IMR-90 (cell line): ENCODE measurements at regions of chr1 and their contacts with region 1.

Region 1: DNA sequence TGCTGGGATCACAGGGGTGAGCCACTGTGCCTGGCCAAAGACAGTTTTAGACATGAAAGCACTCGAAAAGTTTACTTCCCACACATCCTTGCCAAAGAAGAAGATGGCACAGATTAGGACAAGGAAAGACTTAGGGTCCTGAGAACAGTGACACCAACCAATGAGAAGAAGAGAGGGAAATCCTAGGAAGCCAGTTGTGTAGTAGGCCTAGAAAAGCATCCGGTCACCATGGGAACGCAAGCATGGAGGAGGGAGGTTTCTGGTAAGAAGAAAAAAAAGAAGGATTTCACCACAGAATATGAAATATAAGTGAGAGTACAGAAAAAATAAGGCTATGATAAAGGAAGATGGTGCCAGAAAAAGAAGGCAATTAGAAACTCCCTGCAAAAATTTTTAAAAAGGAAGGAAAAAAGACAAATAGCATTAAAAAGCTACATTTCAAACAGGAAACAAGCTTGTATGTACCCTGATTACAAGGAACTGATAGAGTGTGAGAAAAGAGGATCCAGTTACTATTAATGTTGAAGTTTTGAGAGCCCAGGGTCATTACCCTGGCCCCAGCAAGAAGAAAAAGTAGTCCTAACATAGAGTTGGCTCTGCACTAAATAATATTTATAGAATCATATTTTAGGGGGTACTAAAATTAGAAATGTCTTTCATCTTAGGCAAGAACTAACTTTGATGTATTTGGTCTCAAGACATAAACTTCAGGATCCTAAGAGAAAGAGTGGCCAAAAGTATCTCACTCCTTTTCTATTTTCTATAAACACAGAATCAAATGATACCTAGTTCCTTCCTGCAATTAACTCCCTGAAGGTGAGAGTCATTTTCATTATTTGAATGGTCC is 16.1 kb downstream of the DIPK1A start:
- DNase-seq: no peak
- ATAC-seq: no peak
- H3K4me3 ChIP-seq: no peak overlapping the region
- H3K27ac ChIP-seq: no peak overlapping the region
- H3K4me1 ChIP-seq: peaks cover 11% of the 10 kb centered on the region
- H3K27me3 ChIP-seq: no peaks in the 10 kb centered on the region
- CTCF ChIP-seq: no peak
- POLR2A ChIP-seq: no peak
- RAD21 ChIP-seq: no peak

Region 2: DNA sequence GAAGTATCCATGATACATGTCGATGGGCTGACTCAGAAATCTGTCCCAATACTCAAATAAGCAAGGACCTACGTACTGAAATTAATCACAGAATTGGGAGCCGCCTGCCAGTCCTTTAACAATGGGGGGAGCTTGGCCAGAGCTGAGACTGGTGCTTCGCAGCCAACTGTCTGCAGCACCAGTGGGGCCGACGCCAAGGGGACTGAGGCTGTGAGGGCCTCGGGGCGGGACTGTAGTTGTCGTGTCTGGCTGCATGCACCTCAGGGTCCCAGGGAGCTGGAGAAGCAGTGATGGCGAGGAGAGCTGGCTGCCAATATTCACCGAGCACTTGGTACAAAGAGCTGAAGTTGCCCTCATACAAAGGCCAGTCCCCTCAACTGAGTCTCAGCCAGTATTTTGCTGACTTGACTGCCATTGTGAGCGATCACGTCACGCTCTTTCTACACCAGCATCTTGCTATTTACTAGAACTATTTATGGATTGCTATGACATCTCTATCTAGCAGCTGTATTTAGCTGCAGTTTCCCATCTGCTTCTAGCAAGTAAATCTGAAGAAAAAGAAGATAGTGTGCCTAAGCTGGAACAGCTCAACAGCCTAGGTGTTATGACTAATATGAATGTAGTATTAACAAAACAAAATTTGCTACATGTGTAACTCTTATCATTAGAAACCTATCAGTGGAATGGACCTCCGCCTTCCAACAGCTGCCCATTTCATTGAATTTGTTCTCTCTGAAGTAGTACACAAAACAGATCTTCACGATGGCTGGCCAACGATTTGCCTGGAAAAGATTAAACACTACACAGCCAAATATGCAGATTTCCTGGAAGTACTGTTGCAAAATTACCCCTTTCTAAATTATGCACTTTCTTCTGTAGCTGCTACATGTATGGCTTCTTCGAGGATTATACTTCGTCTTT is 189.3 kb before region 1 on chr1:
- CTCF ChIA-PET with region 1: no interaction called
- POLR2A ChIA-PET with region 1: no interaction called
- dilution Hi-C with region 1: no loop called
- in situ Hi-C with region 1: no loop called
- intact Hi-C with region 1: no loop called
- DNase-seq: peak; percentile 72
- ATAC-seq: no peak
- H3K4me3 ChIP-seq: no peak overlapping the region
- H3K27ac ChIP-seq: peak overlapping the region; percentile 39
- H3K4me1 ChIP-seq: peaks cover 17% of the 10 kb centered on the region
- H3K27me3 ChIP-seq: no peaks in the 10 kb centered on the region
- CTCF ChIP-seq: no peak
- POLR2A ChIP-seq: no peak
- RAD21 ChIP-seq: no peak

Region 3: GRCh38 chr1:92877792-92878191 is 67.3 kb before region 1 on chr1:
- CTCF ChIA-PET with region 1: no interaction called
- POLR2A ChIA-PET with region 1: no interaction called
- dilution Hi-C with region 1: no loop called
- in situ Hi-C with region 1: no loop called
- intact Hi-C with region 1: loop called (anchors 5 kb)
- DNase-seq: peak; percentile 46
- ATAC-seq: no peak
- H3K4me3 ChIP-seq: no peak overlapping the region
- H3K27ac ChIP-seq: no peak overlapping the region
- H3K4me1 ChIP-seq: no peaks in the 10 kb centered on the region
- H3K27me3 ChIP-seq: no peaks in the 10 kb centered on the region
- CTCF ChIP-seq: no peak
- POLR2A ChIP-seq: no peak
- RAD21 ChIP-seq: no peak

Region 4: DNA sequence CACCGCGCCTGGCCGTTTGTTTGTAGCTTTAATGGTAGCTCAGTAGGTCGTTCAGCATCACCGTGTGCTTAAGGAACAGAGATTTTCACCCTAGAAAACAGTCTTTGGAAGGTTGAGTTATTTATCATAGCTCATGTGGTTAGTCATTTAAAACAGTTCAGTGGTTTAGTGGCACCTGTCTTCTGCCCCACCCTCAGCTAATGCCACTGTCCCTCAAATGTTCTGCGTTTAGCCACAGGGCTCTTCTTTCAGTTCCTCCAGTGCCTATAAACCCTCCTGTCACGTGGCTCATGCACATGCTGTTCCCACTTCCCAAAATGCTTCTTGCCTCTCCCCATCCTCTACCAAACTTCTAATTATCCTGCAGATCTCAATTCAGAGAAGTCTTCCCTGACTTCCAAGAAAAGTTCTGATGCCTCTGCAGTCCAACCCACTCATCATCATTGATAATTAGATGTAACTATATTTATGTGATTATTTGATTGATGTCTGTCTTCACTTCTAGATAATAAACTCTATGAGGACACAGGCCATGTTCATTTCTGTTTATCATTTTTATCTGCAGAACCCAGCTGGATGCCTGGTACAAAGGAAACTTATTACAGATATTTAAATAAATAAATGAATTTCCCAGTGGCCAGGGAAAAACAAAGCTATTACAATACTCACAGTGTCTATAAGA is 30.6 kb after region 1 on chr1:
- CTCF ChIA-PET with region 1: no interaction called
- POLR2A ChIA-PET with region 1: no interaction called
- dilution Hi-C with region 1: no loop called
- in situ Hi-C with region 1: no loop called
- intact Hi-C with region 1: no loop called
- DNase-seq: no peak
- ATAC-seq: no peak
- H3K4me3 ChIP-seq: no peak overlapping the region
- H3K27ac ChIP-seq: no peak overlapping the region
- H3K4me1 ChIP-seq: no peaks in the 10 kb centered on the region
- H3K27me3 ChIP-seq: peaks cover 17% of the 10 kb centered on the region
- CTCF ChIP-seq: no peak
- POLR2A ChIP-seq: no peak
- RAD21 ChIP-seq: no peak

Region 5: GRCh38 chr1:93275634-93276295 is 330.6 kb after region 1 on chr1:
- CTCF ChIA-PET with region 1: no interaction called
- POLR2A ChIA-PET with region 1: no interaction called
- dilution Hi-C with region 1: no loop called
- in situ Hi-C with region 1: no loop called
- intact Hi-C with region 1: no loop called
- DNase-seq: no peak
- ATAC-seq: no peak
- H3K4me3 ChIP-seq: no peak overlapping the region
- H3K27ac ChIP-seq: no peak overlapping the region
- H3K4me1 ChIP-seq: no peaks in the 10 kb centered on the region
- H3K27me3 ChIP-seq: no peaks in the 10 kb centered on the region
- CTCF ChIP-seq: no peak
- POLR2A ChIP-seq: no peak
- RAD21 ChIP-seq: no peak

Region 6: GRCh38 chr1:94209425-94209824 is 1264.3 kb after region 1 on chr1:
- CTCF ChIA-PET with region 1: no interaction called
- POLR2A ChIA-PET with region 1: no interaction called
- dilution Hi-C with region 1: no loop called
- in situ Hi-C with region 1: no loop called
- intact Hi-C with region 1: no loop called
- DNase-seq: peak; percentile 58
- ATAC-seq: no peak
- H3K4me3 ChIP-seq: no peak overlapping the region
- H3K27ac ChIP-seq: no peak overlapping the region
- H3K4me1 ChIP-seq: no peaks in the 10 kb centered on the region; the same call in 1 of the 2 replicates
- H3K27me3 ChIP-seq: no peaks in the 10 kb centered on the region
- CTCF ChIP-seq: no peak
- POLR2A ChIP-seq: no peak
- RAD21 ChIP-seq: no peak